Heart right ventricle (tissue), 16 donors: ENCODE measurements at regions of chr6 and their contacts with region 1.

Region 1: GRCh38 chr6:119552021-119552420 is 202.5 kb upstream of the MAN1A1 start:
- DNase-seq: no peak
- ATAC-seq: no peak
- H3K4me3 ChIP-seq: no peak overlapping the region
- H3K27ac ChIP-seq: no peak overlapping the region
- H3K4me1 ChIP-seq: no peaks in the 10 kb centered on the region
- H3K27me3 ChIP-seq: no peaks in the 10 kb centered on the region
- CTCF ChIP-seq: no peak

Region 2: GRCh38 chr6:119430800-119431199 is 121.2 kb before region 1 on chr6:
- intact Hi-C with region 1: no loop called
- DNase-seq: no peak
- ATAC-seq: no peak
- H3K4me3 ChIP-seq: no peak overlapping the region
- H3K27ac ChIP-seq: no peak overlapping the region
- H3K4me1 ChIP-seq: no peaks in the 10 kb centered on the region
- H3K27me3 ChIP-seq: no peaks in the 10 kb centered on the region
- CTCF ChIP-seq: no peak

Region 3: DNA sequence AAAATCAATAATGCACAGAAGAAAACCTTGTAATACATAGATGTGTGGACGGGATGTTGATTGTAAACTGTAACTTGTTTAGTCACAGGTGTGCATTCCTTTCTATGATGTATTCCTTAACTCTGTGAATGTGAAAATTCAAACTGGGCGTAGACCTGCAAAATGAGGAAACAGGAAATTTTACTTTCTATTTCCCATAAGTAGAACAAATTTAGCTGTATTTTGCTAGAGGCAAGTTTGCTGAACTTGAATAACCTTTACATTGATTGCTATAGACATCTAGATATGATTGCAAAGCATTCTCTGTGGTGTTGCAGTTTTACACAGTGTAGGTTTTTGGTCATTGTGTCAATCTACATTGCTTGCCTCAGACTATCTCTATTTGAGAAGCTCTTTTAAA is 165.9 kb after region 1 on chr6:
- intact Hi-C with region 1: loop called in 1 of 10 experiments (anchors 10 kb)
- DNase-seq: no peak
- ATAC-seq: no peak
- H3K4me3 ChIP-seq: no peak overlapping the region
- H3K27ac ChIP-seq: no peak overlapping the region
- H3K4me1 ChIP-seq: peaks cover 0 to 14% (median 0%) of the 10 kb centered on the region in 9 donors
- H3K27me3 ChIP-seq: no peaks in the 10 kb centered on the region
- CTCF ChIP-seq: no peak